ENCODE measurements at regions of chr5 and their contacts with region 1.

Region 1: DNA sequence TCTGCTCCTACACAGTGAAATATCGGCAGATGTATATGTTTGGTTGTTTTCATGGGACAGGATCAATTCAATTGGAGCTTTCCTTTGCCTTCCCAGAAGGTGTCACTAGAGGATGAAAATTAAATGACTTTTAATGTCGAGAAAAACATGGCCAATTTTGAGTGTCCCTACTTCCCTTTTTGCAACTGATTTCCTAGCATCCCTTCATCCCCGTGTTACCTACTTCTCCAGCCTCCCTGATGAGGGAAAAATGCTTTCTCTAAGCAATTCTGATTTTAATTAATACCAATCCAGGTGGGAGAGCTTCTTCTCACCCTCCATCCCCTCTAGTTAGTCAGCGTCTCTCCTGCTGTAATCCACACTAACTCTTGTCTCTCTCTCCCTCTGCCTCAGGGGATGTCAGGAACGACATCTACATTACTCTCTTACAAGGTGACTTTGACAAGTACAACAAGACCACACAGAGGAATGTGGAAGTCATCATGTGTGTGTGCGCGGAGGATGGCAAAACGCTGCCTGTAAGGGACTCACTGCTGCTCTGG is 64.9 kb downstream of the DOCK2 start:
- DNase-seq: peak; percentile 70
- H3K4me3 ChIP-seq: no peak overlapping the region
- H3K27ac ChIP-seq: no peak overlapping the region
- H3K4me1 ChIP-seq: peaks cover 37% of the 10 kb centered on the region
- H3K27me3 ChIP-seq: no peaks in the 10 kb centered on the region

Region 2: DNA sequence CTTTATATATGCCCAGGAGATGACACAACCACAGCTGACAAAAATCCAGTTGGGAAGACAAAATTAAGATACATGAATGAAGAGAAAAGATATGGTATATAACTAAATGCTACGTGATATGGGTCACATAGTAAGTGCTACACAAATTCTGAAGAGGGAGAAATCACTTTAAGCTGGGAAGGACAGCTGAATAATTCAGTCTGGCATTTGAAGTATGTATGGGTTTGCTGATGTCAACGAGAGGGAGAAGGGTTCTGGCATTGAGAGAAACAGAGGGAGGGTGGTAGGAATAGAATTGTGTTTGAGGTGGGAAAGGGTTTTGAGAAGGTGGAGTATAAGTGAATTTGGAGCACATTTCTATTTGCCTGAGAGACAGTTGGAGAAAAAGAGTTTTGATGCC is 394.3 kb before region 1 on chr5:
- in situ Hi-C with region 1: no loop called
- DNase-seq: peak; percentile 22
- H3K4me3 ChIP-seq: no peak overlapping the region
- H3K27ac ChIP-seq: no peak overlapping the region
- H3K4me1 ChIP-seq: peaks cover 16% of the 10 kb centered on the region
- H3K27me3 ChIP-seq: no peaks in the 10 kb centered on the region

Region 3: DNA sequence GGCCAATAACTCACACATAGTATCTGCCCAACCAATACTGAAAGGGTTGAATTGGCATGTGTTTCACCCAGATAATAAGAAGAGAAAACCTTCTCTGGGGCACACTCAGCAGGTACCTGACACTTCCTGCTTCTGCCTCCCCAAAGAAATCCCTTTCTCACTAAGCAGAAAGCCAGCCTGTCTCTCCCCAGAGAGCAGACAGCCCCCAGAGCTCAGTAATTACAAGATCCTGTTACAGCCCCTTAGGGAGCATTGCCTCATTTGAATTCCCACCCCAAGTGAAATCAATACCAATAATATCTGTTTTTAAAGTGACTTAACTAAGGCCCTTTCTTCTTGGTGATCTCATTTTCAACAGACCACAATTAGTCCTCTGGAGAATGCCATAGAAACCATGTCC is 365.2 kb after region 1 on chr5:
- in situ Hi-C with region 1: loop called (anchors 10 kb)
- DNase-seq: no peak
- H3K4me3 ChIP-seq: no peak overlapping the region
- H3K27ac ChIP-seq: no peak overlapping the region
- H3K4me1 ChIP-seq: no peaks in the 10 kb centered on the region
- H3K27me3 ChIP-seq: no peaks in the 10 kb centered on the region

Region 4: GRCh38 chr5:170183816-170184687 is 482.1 kb after region 1 on chr5:
- in situ Hi-C with region 1: loop called (anchors 25 kb)
- DNase-seq: peak; percentile 69
- H3K4me3 ChIP-seq: no peak overlapping the region
- H3K27ac ChIP-seq: no peak overlapping the region
- H3K4me1 ChIP-seq: no peaks in the 10 kb centered on the region
- H3K27me3 ChIP-seq: peaks cover 26% of the 10 kb centered on the region; the same call in 1 of the 2 replicates

Measured in GM23248 (cell line).